ENCODE measurements at regions of chr17 and their contacts with region 1.

Region 1: DNA sequence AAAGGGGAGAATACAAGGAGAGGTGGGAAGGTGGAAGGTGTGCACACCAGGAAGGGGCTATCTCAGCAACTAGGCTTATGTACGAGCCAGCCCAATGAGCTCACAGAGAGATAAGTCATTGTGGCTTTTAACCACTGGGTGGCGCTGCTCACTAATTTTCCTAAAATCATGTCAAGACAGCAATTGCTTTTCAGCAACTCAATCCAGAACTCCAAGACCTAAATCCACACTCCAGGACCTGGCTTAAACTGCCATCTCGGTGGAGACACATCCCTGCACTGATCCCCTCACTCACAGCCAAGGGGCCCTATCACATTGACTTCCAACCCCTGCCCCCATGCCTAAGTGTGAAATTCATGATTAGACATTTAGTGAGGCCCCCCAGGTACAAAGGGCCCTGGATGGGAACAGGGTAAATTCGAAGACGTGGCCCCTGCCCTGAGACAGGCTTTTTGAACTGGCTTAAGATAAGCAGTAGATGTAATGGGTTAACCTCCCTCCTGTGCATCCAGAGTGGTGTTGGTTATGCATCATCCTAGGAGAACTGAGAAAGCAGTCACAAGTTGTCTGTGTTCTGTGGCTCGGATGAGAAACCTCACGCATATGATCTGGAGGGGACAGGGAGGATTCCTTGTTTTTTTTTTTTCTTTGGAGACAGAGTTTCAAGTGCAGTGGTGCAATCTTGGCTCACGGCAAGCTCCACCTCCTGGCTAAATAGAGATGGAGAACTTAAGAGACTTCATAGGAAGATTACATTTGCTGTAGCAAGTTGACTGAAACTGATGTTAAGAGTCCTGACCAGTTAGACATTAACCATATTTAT is 11.5 kb downstream of the CCL16 start:
- DNase-seq: peak; percentile 81
- H3K4me3 Mint-ChIP-seq: no peak overlapping the region
- H3K27ac Mint-ChIP-seq: no peak overlapping the region
- H3K4me1 Mint-ChIP-seq: no peaks in the 10 kb centered on the region
- H3K27me3 Mint-ChIP-seq: peaks cover 1% of the 10 kb centered on the region

Region 2: DNA sequence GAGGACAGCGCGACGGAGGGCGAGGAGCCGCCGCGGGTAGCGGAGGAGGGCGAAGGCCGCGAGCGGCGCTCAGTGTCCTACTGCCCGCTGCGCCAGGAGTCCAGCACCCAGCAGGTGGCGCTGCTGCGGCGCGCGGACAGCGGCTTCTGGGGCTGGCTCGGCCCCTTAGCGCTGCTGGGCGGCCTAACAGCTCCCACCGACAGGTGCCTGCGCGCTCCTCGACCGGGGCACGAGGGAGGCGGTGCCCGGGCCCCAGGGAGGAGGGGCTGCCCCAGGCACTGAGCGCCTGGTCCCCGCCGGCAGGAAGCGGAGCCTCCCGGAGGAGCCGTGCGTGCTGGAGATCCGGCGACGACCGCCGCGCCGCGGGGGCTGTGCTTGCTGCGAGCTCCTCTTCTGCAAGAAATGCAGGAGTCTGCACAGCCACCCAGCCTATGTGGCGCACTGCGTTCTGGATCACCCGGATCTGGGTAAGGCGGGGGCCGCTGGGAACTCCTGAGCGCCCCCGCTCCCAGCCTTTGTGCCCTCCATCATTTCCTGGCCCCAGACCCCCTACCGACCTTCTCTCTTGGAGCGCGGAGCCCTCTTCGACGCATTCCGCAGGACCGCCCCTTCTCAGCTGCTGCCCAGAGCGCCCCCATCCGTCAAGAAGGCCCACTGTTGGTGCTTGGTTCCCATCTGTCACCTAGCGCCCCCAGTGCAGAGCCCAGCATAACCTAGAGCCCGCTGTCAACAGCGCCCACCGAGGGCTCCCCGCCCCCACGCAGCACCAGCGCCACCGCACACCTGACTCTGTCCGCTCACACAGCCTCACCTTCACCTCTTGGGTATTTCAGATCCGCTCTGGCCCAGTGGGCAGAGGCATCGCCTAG is 205.4 kb before region 1 on chr17:
- CTCF ChIA-PET with region 1: no interaction called
- POLR2A ChIA-PET with region 1: no interaction called
- intact Hi-C with region 1: no loop called
- DNase-seq: peak; percentile 91
- H3K4me3 Mint-ChIP-seq: peak overlapping the region; percentile 81
- H3K27ac Mint-ChIP-seq: peak overlapping the region; percentile 46
- H3K4me1 Mint-ChIP-seq: peaks cover 9% of the 10 kb centered on the region
- H3K27me3 Mint-ChIP-seq: no peaks in the 10 kb centered on the region

Region 3: DNA sequence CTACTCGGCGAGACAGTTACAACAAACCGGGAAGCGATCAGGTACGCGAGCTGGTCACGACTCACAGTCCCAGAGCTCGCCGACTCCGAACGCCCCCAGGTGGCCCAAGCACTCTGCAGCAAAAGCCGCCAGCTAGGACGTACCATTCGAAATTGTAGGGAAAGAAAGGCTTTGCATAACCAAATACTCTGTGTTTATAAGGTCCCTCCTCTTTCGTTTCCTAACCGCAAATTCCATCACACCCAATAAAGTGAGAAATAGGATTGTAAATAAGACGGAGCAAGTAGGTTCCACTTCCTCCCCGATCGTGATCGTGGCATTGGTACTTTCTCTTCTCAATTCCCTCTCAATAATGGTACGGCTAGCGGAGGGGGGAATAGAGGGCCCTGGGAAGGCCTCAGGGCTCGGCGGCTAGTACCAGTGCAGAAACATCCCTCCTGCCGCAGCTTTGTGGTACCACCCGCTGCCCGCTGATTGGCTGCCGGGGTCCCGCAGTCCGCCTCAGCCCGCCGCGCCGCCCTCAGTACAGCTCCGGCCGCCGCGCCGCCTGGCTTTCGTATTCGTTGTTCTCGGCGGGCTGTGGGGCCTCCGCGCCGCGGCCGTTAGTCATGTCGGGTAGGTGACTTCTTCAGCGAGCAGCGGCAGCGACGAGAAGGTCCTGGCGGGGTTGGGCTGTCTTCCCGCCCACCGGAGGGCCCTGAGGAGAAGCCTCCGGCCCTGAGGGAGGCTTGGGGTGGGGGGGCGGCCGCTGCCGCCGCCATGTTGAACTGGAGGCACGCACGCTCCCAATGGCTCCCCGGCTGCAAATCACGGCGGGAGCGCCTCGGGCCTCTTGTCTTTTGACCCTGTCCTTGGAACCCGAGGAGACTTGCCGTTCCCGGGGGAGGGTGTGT is 160.6 kb before region 1 on chr17 and contains the start of gene TAF15:
- CTCF ChIA-PET with region 1: no interaction called
- POLR2A ChIA-PET with region 1: no interaction called
- intact Hi-C with region 1: no loop called
- DNase-seq: peak; percentile 97
- H3K4me3 Mint-ChIP-seq: peak within 1 kb of the TSS; percentile 81
- H3K27ac Mint-ChIP-seq: peak within 1 kb of the TSS; percentile 99
- H3K4me1 Mint-ChIP-seq: peaks cover 46% of the 10 kb centered on the region
- H3K27me3 Mint-ChIP-seq: no peaks in the 10 kb centered on the region
- total RNA-seq, gene TAF15: 269 to 271 TPM

Region 4: DNA sequence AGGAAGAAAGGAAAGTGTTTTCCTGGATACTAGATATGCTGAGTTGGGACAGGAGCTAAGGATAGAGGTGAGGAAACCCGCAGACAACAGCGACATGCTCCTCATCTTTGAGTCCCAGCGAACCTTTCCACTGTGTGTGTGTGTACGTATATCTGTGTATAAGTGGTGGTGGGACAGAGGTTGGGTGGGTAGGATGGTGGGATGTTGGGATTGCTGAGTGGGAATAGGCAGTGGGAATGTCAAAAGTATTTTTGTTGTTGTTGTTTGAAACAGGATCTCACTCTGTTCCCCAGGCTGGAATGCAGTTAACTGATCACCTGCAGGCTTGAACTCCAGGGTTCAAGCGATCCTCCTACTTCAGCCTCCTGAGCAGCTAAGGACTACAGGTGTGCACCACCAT is 85.4 kb before region 1 on chr17:
- CTCF ChIA-PET with region 1: no interaction called
- POLR2A ChIA-PET with region 1: no interaction called
- intact Hi-C with region 1: no loop called
- DNase-seq: no peak
- H3K4me3 Mint-ChIP-seq: no peak overlapping the region
- H3K27ac Mint-ChIP-seq: no peak overlapping the region
- H3K4me1 Mint-ChIP-seq: peaks cover 29% of the 10 kb centered on the region
- H3K27me3 Mint-ChIP-seq: no peaks in the 10 kb centered on the region

Region 5: GRCh38 chr17:35953720-35954119 is 16.0 kb before region 1 on chr17:
- CTCF ChIA-PET with region 1: interaction called, 16 read pairs
- POLR2A ChIA-PET with region 1: no interaction called
- intact Hi-C with region 1: no loop called
- DNase-seq: no peak
- H3K4me3 Mint-ChIP-seq: no peak overlapping the region
- H3K27ac Mint-ChIP-seq: no peak overlapping the region
- H3K4me1 Mint-ChIP-seq: no peaks in the 10 kb centered on the region
- H3K27me3 Mint-ChIP-seq: peaks cover 7% of the 10 kb centered on the region

Region 6: DNA sequence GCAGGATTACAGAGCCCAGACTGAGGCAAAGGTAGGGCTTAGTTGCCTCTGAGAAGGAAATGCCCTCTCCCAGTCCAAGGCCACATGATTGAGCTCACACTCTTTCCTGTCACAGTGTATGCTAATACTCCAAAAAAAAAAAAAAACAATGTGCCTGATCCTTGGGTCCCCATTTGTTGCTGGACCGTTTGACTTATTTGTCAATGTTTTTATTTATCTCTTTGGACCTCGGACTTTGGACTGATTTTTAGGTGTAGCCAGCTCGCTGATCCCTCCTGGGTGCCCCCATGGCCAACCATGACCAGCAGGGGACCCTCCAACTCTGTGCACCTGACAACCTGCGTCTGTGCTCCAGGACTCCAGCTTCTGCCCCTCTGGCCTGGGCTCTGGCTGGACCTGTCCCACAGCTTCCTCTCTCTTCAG is 12.2 kb after region 1 on chr17:
- CTCF ChIA-PET with region 1: interaction called, 24 read pairs
- POLR2A ChIA-PET with region 1: no interaction called
- intact Hi-C with region 1: no loop called
- DNase-seq: peak; percentile 20
- H3K4me3 Mint-ChIP-seq: no peak overlapping the region
- H3K27ac Mint-ChIP-seq: no peak overlapping the region
- H3K4me1 Mint-ChIP-seq: no peaks in the 10 kb centered on the region
- H3K27me3 Mint-ChIP-seq: peaks cover 5% of the 10 kb centered on the region

Region 7: GRCh38 chr17:36486204-36487194 is 516.7 kb after region 1 on chr17 and contains the start of gene ZNHIT3:
- CTCF ChIA-PET with region 1: interaction called, 21 read pairs
- POLR2A ChIA-PET with region 1: no interaction called
- intact Hi-C with region 1: loop called (anchors 2 kb)
- DNase-seq: peak; percentile 96
- H3K4me3 Mint-ChIP-seq: peak within 1 kb of the TSS; percentile 94
- H3K27ac Mint-ChIP-seq: peak within 1 kb of the TSS; percentile 93
- H3K4me1 Mint-ChIP-seq: peaks cover 48% of the 10 kb centered on the region
- H3K27me3 Mint-ChIP-seq: peaks cover 13% of the 10 kb centered on the region
- total RNA-seq, gene ZNHIT3: 41.6 to 45.2 TPM